ENCODE measurements at regions of chr19 and their contacts with region 1.

Region 1: GRCh38 chr19:19900729-19901444 is at the start of gene ZNF93:
- DNase-seq: peak; percentile 98
- ATAC-seq: peak; percentile 96
- H3K4me3 Mint-ChIP-seq: peak within 1 kb of the TSS; percentile 83
- H3K27ac Mint-ChIP-seq: peak within 1 kb of the TSS; percentile 93
- H3K4me1 Mint-ChIP-seq: peaks cover 38% of the 10 kb centered on the region
- H3K27me3 Mint-ChIP-seq: no peaks in the 10 kb centered on the region
- CTCF ChIP-seq: no peak
- total RNA-seq, gene ZNF93: 17.2 to 17.8 TPM

Region 2: GRCh38 chr19:19865739-19866481 is 35.0 kb before region 1 on chr19 and contains the start of gene ZNF253:
- CTCF ChIA-PET with region 1: interaction called, 5 read pairs
- POLR2A ChIA-PET with region 1: interaction called, 45 read pairs
- intact Hi-C with region 1: no loop called
- DNase-seq: peak; percentile 99
- ATAC-seq: peak; percentile 93
- H3K4me3 Mint-ChIP-seq: peak within 1 kb of the TSS; percentile 98
- H3K27ac Mint-ChIP-seq: peak within 1 kb of the TSS; percentile 98
- H3K4me1 Mint-ChIP-seq: peaks cover 24% of the 10 kb centered on the region
- H3K27me3 Mint-ChIP-seq: no peaks in the 10 kb centered on the region
- CTCF ChIP-seq: no peak
- total RNA-seq, gene ZNF253: 10.8 to 13.5 TPM